ENCODE measurements at regions of chr14 and their contacts with region 1.

Region 1: GRCh38 chr14:103333754-103334643 is at the start of gene EIF5:
- DNase-seq: peak; percentile 99
- ATAC-seq: peak; percentile 91
- H3K4me3 Mint-ChIP-seq: peak within 1 kb of the TSS; percentile 79
- H3K27ac Mint-ChIP-seq: peak within 1 kb of the TSS; percentile 92
- H3K4me1 Mint-ChIP-seq: peaks cover 53% of the 10 kb centered on the region
- H3K27me3 Mint-ChIP-seq: no peaks in the 10 kb centered on the region
- total RNA-seq, gene EIF5: 222 to 234 TPM

Region 2: GRCh38 chr14:102316743-102317563 is 1017.0 kb before region 1 on chr14:
- CTCF ChIA-PET with region 1: no interaction called
- POLR2A ChIA-PET with region 1: no interaction called
- intact Hi-C with region 1: loop called in 1 of 2 experiments (anchors 2 kb)
- DNase-seq: peak; percentile 97
- ATAC-seq: peak; percentile 69
- H3K4me3 Mint-ChIP-seq: peak overlapping the region; percentile 92
- H3K27ac Mint-ChIP-seq: peak overlapping the region; percentile 98
- H3K4me1 Mint-ChIP-seq: peaks cover 61% of the 10 kb centered on the region
- H3K27me3 Mint-ChIP-seq: no peaks in the 10 kb centered on the region

Region 3: DNA sequence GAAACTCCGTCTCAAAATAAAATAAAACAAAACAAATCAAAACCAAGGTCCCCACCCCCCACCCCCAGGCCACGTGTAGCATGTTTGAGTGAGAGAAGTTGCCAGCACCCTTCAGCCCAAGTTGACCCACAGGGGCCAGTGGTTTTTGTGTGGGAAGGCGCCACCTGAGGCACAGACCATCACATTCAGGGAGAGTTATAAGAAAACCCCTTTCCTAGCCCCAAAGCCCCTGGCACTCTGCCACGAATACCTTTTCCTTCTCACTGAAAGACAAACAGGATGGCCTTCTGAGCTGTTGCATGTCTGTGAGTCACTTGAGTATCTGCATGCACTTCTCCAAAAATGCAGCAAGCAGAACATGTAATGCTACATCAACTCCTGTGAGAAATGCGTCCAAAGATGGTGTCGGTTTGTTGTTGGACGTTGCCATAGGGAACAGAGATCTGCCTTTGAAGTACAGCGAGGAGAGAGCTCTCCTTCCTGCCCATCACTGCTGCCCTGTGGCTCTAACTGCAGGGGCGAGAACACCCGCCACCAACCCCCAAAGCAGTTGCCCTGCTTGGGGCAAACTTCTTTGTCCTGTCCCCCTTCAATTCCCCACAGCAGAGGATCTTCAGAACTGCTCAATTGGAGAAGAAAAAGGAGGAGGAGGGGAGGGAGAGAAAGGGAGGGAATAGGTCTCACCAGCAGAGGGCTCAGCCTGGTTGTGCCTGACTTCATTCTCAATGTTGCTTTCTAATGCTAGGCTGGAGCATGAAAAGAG is 559.4 kb before region 1 on chr14:
- CTCF ChIA-PET with region 1: no interaction called
- POLR2A ChIA-PET with region 1: no interaction called
- intact Hi-C with region 1: loop called in 1 of 2 experiments (anchors 1 kb)
- DNase-seq: peak; percentile 73
- ATAC-seq: peak; percentile 58
- H3K4me3 Mint-ChIP-seq: peak overlapping the region; percentile 7
- H3K27ac Mint-ChIP-seq: peak overlapping the region; percentile 78
- H3K4me1 Mint-ChIP-seq: peaks cover 32% of the 10 kb centered on the region
- H3K27me3 Mint-ChIP-seq: no peaks in the 10 kb centered on the region

Region 4: DNA sequence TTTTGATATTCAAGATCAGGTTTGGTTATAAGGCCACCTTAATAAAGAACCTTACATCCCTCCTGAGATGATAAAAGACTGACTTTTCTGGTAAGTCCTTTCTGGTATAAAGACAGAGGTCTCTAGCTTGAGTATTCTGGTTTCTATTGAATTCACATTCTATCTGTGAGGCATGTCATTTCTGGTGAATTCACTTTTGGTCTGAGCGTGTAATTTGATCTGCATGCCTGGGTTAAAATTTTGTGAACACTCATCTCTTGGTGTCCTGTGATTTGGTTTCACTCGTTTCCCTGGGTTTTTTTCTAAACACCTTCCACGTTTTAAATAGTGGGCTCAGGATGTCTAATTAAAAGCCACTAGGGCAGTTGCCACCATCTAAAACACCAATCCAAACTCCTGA is 12.3 kb after region 1 on chr14:
- CTCF ChIA-PET with region 1: interaction called, 4 read pairs
- POLR2A ChIA-PET with region 1: interaction called, 34 read pairs
- intact Hi-C with region 1: no loop called
- DNase-seq: no peak
- ATAC-seq: no peak
- H3K4me3 Mint-ChIP-seq: no peak overlapping the region
- H3K27ac Mint-ChIP-seq: no peak overlapping the region
- H3K4me1 Mint-ChIP-seq: peaks cover 2% of the 10 kb centered on the region
- H3K27me3 Mint-ChIP-seq: no peaks in the 10 kb centered on the region

Region 5: GRCh38 chr14:103528587-103529382 is 194.8 kb after region 1 on chr14 and contains the start of gene TRMT61A:
- CTCF ChIA-PET with region 1: no interaction called
- POLR2A ChIA-PET with region 1: no interaction called
- intact Hi-C with region 1: loop called in 1 of 2 experiments (anchors 1 kb)
- DNase-seq: peak; percentile 87
- ATAC-seq: peak; percentile 77
- H3K4me3 Mint-ChIP-seq: peak within 1 kb of the TSS; percentile 96
- H3K27ac Mint-ChIP-seq: peak within 1 kb of the TSS; percentile 94
- H3K4me1 Mint-ChIP-seq: peaks cover 33% of the 10 kb centered on the region
- H3K27me3 Mint-ChIP-seq: peaks cover 2% of the 10 kb centered on the region
- total RNA-seq, gene TRMT61A: 8.8 to 9.0 TPM

Region 6: DNA sequence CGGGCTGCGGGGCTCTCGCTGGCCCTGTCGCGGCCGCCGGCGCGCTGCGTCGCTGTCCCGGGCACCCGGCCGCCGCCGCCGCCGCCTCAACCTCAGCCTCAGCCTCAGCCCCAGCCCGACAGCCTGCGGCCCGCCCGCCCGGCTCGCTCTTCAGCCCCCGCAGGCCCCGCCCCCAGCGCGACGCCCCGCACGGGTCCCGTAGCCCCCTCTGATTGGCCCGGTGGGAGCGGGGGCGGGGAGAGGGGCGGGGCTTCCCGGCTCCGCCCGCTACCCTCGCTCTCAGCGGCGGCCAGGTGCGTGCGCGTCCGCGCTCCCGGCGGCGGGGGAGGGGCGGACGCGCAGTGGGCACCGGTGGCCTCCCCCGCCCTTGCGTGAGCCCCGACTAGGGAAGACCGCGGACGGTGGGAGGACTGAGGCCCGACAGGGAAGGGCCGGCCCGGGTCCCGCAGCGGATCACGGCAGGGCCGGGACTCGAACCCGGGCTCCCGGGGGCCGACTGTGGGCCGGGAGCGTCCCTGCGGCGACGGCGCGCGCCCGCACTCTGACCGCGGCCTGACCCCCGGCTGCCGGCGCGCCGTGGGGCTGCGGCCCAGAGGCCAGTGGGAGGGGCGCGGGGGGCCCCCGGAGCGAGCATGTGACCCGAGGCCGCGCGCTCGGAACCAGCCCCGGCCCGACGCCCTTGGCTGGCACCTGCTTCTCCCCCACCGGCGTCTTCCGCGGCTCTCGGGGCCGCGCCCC is 513.6 kb after region 1 on chr14 and contains the start of gene PPP1R13B:
- CTCF ChIA-PET with region 1: no interaction called
- POLR2A ChIA-PET with region 1: no interaction called
- intact Hi-C with region 1: loop called in 1 of 2 experiments (anchors 2 kb)
- DNase-seq: peak; percentile 97
- ATAC-seq: peak; percentile 98
- H3K4me3 Mint-ChIP-seq: peak within 1 kb of the TSS; percentile 76
- H3K27ac Mint-ChIP-seq: peak within 1 kb of the TSS; percentile 38
- H3K4me1 Mint-ChIP-seq: peaks cover 16% of the 10 kb centered on the region
- H3K27me3 Mint-ChIP-seq: peaks cover 5% of the 10 kb centered on the region
- total RNA-seq, gene PPP1R13B: 9.3 to 10.3 TPM